Activated T-helper 2 cell treated with anti-CD3 and anti-CD28 coated beads, Interferon-gamma antibody, Interleukin-2, Interleukin-4, amounts not matched to agents 10 μg/mL and 5 μg/mL and 100 μg/mL, durations not matched to agents 14 hours and 24 hours and 36 hours (primary cell): ENCODE measurements at regions of chr3 and their contacts with region 1.

Region 1: DNA sequence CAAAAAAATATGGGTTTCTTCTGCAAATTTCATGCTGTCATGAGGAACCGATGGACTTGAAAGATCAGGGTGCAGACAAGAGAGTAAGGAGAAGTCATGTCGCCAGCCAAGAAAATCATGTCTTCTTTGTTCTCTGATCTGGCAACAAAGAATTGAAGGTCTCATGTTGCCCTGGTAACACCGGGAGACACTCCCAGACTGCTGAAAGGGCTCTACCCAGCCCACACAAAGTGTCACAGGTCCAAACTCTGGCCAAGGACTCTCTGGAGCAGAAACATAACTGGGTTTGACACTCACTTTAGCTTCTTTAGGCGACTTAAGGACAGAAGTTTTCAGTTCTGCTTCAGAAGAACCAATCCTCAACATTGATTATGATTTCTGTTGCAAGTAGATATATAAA is 42.9 kb downstream of the SIDT1 start:
- DNase-seq: no peak
- H3K4me3 Mint-ChIP-seq: no peak overlapping the region
- H3K27ac Mint-ChIP-seq: no peak overlapping the region
- H3K4me1 Mint-ChIP-seq: peaks cover 3% of the 10 kb centered on the region
- H3K27me3 Mint-ChIP-seq: no peaks in the 10 kb centered on the region

Region 2: DNA sequence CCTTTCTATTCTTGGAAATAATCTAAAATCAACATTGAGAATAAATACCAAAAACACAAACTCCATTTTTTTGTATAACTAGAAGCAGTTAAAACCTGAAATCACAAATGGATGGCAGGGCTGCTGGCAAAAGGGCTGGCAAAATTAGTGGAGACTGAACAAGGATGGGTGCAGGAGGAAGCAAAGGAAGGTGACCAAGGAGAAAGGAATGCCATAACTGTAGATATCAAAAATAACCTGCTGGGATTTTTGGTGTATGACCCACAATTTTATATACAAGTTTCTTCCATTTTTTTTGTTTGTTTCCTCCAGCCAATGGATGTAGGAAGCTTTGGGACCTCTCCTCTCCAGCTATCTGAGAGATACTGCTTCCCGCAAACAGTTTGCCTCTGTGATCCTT is 146.6 kb before region 1 on chr3:
- intact Hi-C with region 1: no loop called
- DNase-seq: no peak
- H3K4me3 Mint-ChIP-seq: no peak overlapping the region
- H3K27ac Mint-ChIP-seq: no peak overlapping the region
- H3K4me1 Mint-ChIP-seq: no peaks in the 10 kb centered on the region
- H3K27me3 Mint-ChIP-seq: no peaks in the 10 kb centered on the region

Region 3: GRCh38 chr3:113495035-113495434 is 80.2 kb before region 1 on chr3:
- intact Hi-C with region 1: loop called (anchors 1 kb)
- DNase-seq: no peak
- H3K4me3 Mint-ChIP-seq: no peak overlapping the region
- H3K27ac Mint-ChIP-seq: no peak overlapping the region
- H3K4me1 Mint-ChIP-seq: no peaks in the 10 kb centered on the region
- H3K27me3 Mint-ChIP-seq: no peaks in the 10 kb centered on the region

Region 4: DNA sequence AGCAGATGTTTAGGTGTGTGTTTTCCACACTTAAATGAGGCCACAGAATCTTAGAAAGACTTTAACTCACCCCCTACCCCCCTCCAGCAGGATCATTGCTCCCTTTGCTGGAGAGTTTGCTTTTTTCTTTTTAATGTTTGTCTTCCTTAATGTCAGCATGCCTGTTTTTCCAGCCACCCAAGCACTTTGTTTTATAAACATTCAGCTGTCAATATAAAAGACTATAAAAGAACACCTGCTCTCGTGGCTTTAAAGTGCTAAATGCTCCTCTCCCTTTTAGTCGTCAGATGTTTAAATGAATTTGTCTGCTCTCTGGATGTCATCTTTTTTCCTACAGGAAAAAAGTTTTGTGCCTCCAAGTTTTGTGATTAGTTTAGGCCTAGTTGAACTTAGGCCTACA is 18.9 kb after region 1 on chr3:
- intact Hi-C with region 1: no loop called
- DNase-seq: no peak
- H3K4me3 Mint-ChIP-seq: no peak overlapping the region
- H3K27ac Mint-ChIP-seq: no peak overlapping the region
- H3K4me1 Mint-ChIP-seq: peaks cover 2% of the 10 kb centered on the region
- H3K27me3 Mint-ChIP-seq: no peaks in the 10 kb centered on the region

Region 5: GRCh38 chr3:113626503-113627371 is 51.5 kb after region 1 on chr3:
- intact Hi-C with region 1: loop called (anchors 1 kb)
- DNase-seq: no peak
- H3K4me3 Mint-ChIP-seq: no peak overlapping the region
- H3K27ac Mint-ChIP-seq: no peak overlapping the region
- H3K4me1 Mint-ChIP-seq: peaks cover 11% of the 10 kb centered on the region
- H3K27me3 Mint-ChIP-seq: no peaks in the 10 kb centered on the region

Region 6: DNA sequence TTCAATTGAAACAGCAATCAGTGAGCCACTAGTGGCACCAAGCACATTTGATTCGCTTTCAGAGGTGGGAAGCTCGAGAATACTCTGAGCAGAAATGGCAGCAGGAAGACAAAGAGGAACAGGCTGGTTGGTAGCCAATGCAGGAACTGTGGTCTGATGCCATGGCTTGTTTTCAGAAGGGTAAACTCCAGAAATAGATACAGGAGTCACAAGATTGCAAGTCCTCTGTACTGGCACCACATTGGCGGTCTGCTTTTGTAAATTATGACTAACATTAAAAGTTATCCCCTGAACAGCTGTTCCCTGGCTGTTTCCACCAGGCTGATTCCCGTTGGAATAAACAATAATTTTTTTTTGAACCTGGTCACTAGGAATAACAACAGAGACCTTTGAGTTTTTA is 85.7 kb after region 1 on chr3:
- intact Hi-C with region 1: no loop called
- DNase-seq: no peak
- H3K4me3 Mint-ChIP-seq: no peak overlapping the region
- H3K27ac Mint-ChIP-seq: no peak overlapping the region
- H3K4me1 Mint-ChIP-seq: peaks cover 4% of the 10 kb centered on the region
- H3K27me3 Mint-ChIP-seq: no peaks in the 10 kb centered on the region